ENCODE measurements at regions of chr1 and their contacts with region 1.

Region 1: DNA sequence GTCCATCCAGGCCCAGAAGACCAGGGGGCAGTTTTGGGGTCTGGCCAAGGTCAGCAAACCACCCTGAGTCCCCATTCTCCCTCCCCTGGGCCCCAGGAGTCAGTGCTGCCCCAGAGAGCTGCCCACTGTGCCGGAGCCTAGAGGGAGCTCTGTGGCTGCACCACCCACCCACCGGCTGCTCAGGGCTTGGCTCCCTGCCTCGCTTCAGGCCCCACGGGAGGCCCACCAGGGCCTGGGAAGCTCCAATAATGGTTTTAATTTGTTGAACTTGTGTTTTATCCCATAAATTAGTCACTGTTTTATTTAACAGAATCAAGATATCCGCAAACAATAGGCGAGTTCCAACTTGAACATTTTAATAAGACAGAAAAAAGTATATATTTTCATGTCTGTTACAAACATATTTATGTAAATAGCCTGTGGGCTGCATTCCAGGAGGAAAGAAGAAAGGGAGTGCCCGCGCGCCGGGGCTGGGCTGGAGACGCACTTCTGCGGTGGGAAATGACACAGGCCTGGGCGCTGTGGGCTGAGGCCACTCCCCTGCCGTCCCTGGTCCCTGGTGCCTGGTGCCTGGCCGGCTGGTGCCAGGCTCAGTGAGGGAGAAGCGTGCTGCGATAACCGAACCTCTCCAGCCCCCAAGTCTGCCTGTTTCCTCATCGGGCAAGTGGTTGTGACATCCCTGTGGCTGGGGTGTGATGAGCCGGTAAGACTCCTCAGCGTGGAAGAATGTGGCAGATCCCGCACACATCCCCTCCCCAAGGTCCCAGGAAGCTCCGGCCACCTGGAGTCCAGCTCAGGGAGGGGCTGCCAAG is 160.5 kb downstream of the PEX14 start:
- DNase-seq: peak; percentile 48 to 84
- H3K4me3 ChIP-seq: no peak overlapping the region
- H3K27ac ChIP-seq: peak overlapping the region; percentile 87 to 88
- H3K4me1 ChIP-seq: peaks cover 11 to 75% (median 61%) of the 10 kb centered on the region in 4 donors
- H3K27me3 ChIP-seq: no peaks in the 10 kb centered on the region
- CTCF ChIP-seq: no peak

Region 2: GRCh38 chr1:9890224-9890731 is 745.0 kb before region 1 on chr1:
- intact Hi-C with region 1: no loop called
- DNase-seq: no peak
- H3K4me3 ChIP-seq: no peak overlapping the region
- H3K27ac ChIP-seq: no peak overlapping the region
- H3K4me1 ChIP-seq: peaks cover 0 to 9% (median 3%) of the 10 kb centered on the region in 4 donors
- H3K27me3 ChIP-seq: no peaks in the 10 kb centered on the region
- CTCF ChIP-seq: no peak

Region 3: GRCh38 chr1:10694633-10695627 is 59.6 kb after region 1 on chr1:
- intact Hi-C with region 1: loop called (anchors 5 kb)
- DNase-seq: peak; percentile 87 to 96
- H3K4me3 ChIP-seq: peak overlapping the region; percentile 71 to 93
- H3K27ac ChIP-seq: peak overlapping the region; percentile 80 to 87
- H3K4me1 ChIP-seq: peaks cover 0 to 56% (median 37%) of the 10 kb centered on the region in 4 donors
- H3K27me3 ChIP-seq: no peaks in the 10 kb centered on the region
- CTCF ChIP-seq: no peak

Measured in tibial artery (tissue), 4 donors.